K562 (cell line): ENCODE measurements at regions of chr22 and their contacts with region 1.

Region 1: DNA sequence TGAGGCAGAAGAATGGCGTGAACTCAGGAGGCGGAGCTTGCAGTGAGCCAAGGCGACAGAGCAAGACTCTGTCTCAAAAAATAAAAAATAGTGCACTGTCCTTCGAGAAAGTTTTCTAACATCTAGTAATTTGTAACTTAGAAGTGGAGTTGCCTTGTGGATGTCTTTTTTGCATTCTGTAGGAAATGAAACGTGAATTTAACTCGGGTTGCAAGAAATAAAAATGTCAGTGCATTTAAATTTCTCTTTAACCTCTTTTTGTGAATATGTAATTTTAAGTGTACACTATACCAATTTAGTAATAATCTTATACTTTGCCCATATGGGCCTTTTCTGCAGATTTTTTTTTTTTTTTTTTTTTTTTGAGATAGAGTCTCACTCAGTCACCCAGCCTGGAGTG is 26.2 kb upstream of the CRKL start:
- DNase-seq: no peak
- ATAC-seq: no peak
- H3K4me3 ChIP-seq: no peak overlapping the region
- H3K27ac ChIP-seq: no peak overlapping the region
- H3K4me1 ChIP-seq: peaks cover 2% of the 10 kb centered on the region in 2 experiments
- H3K27me3 ChIP-seq: peaks cover 0 to 2% of the 10 kb centered on the region in 2 experiments; a peak in 1 of 5 replicates
- CTCF ChIP-seq: no peak
- EP300 ChIP-seq: no peak
- POLR2A ChIP-seq: 0 out of 2 replicates have a peak, but pooled peaks have one; percentile 56
- RAD21 ChIP-seq: no peak

Region 2: GRCh38 chr22:20904008-20904979 is 13.3 kb after region 1 on chr22:
- CTCF ChIA-PET with region 1: no interaction called
- POLR2A ChIA-PET with region 1: interaction called, 60 read pairs
- in situ Hi-C with region 1: no loop called
- intact Hi-C with region 1: loop called (anchors 1 kb)
- DNase-seq: peak; percentile 48 to 63 (median 54)
- ATAC-seq: peak; percentile 9; the same call in 2 of the 3 replicates
- H3K4me3 ChIP-seq: no peak overlapping the region
- H3K27ac ChIP-seq: no peak overlapping the region
- H3K4me1 ChIP-seq: no peaks in the 10 kb centered on the region
- H3K27me3 ChIP-seq: peaks cover 15 to 27% of the 10 kb centered on the region in 2 experiments
- CTCF ChIP-seq: no peak
- EP300 ChIP-seq: peak; percentile 51; the same call in 1 of the 2 replicates
- POLR2A ChIP-seq: no peak
- RAD21 ChIP-seq: no peak

Region 3: DNA sequence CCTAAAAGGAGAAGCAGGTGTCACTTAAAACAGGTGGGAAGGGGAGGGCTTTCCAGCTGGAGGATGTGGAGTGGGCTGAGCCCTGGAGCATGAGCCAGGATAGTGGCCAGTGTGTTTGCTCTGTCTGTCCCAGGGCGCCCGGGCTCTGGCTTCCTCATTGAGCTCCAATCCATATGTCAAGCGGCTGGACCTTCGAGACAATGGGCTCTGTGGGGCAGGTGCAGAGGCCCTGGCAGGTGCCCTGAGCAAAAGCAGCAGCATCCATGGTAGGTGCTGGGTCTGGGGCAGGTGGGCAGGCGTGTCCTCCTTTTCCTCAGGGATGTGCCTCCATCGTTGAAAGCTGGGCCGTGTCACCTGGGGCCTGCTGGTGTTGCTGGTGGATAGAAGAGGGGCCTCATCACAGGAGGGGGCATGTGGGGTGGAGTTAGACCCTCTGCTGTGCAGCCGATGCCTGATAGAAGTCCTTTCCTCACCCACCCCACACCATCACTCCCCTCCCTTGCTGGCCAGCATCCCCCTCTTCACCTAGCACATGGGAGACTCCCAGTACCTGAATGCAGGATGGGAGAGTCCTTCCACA is 156.9 kb after region 1 on chr22:
- CTCF ChIA-PET with region 1: no interaction called
- POLR2A ChIA-PET with region 1: no interaction called
- in situ Hi-C with region 1: no loop called
- intact Hi-C with region 1: no loop called
- DNase-seq: no peak
- ATAC-seq: no peak
- H3K4me3 ChIP-seq: no peak overlapping the region
- H3K27ac ChIP-seq: no peak overlapping the region
- H3K4me1 ChIP-seq: peaks cover 22 to 36% of the 10 kb centered on the region in 2 experiments
- H3K27me3 ChIP-seq: peaks cover 30 to 77% of the 10 kb centered on the region in 2 experiments; a peak in 4 of 5 replicates
- CTCF ChIP-seq: no peak
- EP300 ChIP-seq: no peak
- POLR2A ChIP-seq: no peak
- RAD21 ChIP-seq: no peak